ENCODE measurements at regions of chr11 and their contacts with region 1.

Region 1: DNA sequence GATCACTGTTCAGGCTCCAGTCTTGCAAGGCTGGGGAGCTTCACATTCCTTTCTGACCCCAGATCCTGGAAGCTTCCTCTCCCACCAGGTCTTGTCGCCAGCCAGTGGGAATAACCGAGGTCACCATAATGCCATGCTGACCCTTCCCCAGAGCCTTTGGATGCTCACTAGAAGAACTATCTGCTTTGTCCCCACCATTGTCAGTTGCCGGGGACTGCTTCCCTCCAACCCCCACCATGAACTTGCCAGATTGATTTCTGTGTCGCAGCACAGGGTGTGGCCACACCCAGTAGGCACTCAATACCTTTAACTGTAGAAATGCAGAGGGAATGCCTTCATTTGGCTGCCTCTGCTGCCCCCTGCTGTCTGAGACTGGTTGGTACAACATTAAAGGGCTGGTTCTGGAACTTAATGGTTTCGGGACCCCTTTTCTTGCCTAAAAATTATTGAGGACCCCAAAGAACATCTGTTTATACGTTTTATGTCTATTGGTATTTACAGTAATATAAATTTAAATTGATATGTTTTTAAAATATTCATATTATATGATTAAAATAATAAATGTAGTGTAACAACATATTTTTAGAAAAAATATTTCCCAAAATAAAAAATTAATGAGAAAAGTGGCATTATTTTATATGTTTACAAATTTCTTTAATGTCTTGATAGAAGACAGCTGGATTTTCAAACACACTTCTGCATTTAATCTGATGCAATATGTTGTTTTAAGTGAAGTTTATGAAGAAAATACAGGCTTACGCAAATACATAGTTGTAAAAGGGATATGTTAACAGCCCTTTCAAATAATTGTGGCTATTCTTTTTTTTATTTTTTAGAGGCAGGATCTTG is 6.7 kb upstream of the GDPD5 start:
- DNase-seq: peak; percentile 88
- ATAC-seq: peak; percentile 89
- H3K4me3 Mint-ChIP-seq: peak overlapping the region; percentile 44
- H3K27ac Mint-ChIP-seq: peak overlapping the region; percentile 39; the same call in 1 of the 2 replicates
- H3K4me1 Mint-ChIP-seq: peaks cover 18% of the 10 kb centered on the region
- H3K27me3 Mint-ChIP-seq: peaks cover 2% of the 10 kb centered on the region; the same call in 1 of the 2 replicates
- CTCF ChIP-seq: peak; percentile 72

Region 2: GRCh38 chr11:75425422-75425821 is 107.0 kb before region 1 on chr11:
- CTCF ChIA-PET with region 1: interaction called, 26 read pairs
- POLR2A ChIA-PET with region 1: no interaction called
- DNase-seq: peak; percentile 81
- ATAC-seq: peak; percentile 73
- H3K4me3 Mint-ChIP-seq: no peak overlapping the region
- H3K27ac Mint-ChIP-seq: no peak overlapping the region
- H3K4me1 Mint-ChIP-seq: peaks cover 21% of the 10 kb centered on the region
- H3K27me3 Mint-ChIP-seq: peaks cover 42% of the 10 kb centered on the region
- CTCF ChIP-seq: no peak; the same call in 1 of the 2 replicates

Region 3: DNA sequence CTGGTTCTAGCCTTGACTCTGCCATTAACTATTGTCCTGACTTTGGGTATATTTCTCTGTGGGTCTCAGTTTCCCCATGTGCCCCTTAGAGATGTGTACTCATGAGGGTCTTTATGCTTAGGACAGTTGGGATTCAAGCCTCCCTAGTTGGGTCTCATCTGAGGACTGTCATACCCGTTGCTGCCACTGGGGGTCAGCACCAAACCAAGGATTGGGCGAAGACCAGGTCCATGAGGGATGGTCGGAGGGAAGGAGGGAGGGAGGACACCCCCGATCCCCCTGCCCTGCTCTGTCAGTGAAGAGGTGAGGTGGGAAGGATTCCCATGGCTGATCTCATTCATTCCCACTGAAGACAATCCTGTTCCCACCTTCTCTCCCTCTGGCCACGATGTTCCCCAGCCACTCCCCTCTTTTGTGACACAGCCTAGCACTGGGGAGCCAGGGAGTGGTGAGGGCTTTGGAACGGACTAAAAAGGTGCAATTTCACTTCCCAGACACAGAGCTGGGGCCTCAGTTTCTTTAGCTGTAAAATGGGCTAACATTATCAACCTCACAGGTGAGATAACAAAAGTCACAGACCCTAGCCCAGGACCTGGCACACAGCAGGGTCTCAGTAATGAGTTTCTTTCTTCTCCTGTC is 87.0 kb before region 1 on chr11:
- CTCF ChIA-PET with region 1: interaction called, 69 read pairs
- POLR2A ChIA-PET with region 1: no interaction called
- DNase-seq: peak; percentile 88
- ATAC-seq: peak; percentile 91
- H3K4me3 Mint-ChIP-seq: no peak overlapping the region
- H3K27ac Mint-ChIP-seq: no peak overlapping the region
- H3K4me1 Mint-ChIP-seq: no peaks in the 10 kb centered on the region
- H3K27me3 Mint-ChIP-seq: no peaks in the 10 kb centered on the region; the same call in none of the 2 replicates
- CTCF ChIP-seq: peak; percentile 97

Region 4: DNA sequence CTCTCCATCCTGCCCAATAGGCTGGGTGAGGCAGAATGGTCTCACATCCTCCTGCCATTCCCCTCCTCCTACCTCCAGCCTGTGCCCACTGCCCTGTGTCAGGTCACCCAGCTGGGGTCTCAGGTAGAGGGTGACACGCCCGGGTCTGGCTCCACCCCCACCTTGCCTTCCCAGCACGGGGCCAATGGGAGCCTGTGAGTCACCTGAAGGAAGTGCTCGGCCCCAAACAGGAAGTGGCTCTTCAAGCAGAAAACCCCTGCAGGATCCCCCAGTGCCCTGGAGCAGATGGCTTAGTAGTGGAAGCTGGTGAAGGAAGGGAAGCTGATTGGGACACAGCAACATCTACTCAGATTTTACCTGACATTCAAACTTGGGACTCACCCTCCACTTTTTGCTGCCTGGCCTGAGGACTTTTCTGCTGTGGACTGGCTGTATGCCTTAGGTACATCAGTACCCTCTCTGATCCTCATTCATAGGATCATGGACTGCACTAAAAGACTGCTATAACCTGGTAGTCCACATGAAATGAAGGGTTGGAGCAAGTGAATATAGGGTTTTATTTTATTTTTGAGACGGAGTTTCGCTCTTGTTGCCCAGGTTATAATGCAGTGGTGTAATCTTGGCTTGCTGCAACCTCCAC is 40.1 kb before region 1 on chr11:
- CTCF ChIA-PET with region 1: interaction called, 21 read pairs
- POLR2A ChIA-PET with region 1: no interaction called
- DNase-seq: peak; percentile 32
- ATAC-seq: peak; percentile 64
- H3K4me3 Mint-ChIP-seq: no peak overlapping the region
- H3K27ac Mint-ChIP-seq: no peak overlapping the region
- H3K4me1 Mint-ChIP-seq: peaks cover 24% of the 10 kb centered on the region
- H3K27me3 Mint-ChIP-seq: no peaks in the 10 kb centered on the region
- CTCF ChIP-seq: no peak

Region 5: GRCh38 chr11:75554258-75555022 is 22.0 kb after region 1 on chr11:
- CTCF ChIA-PET with region 1: interaction called, 10 read pairs
- POLR2A ChIA-PET with region 1: no interaction called
- DNase-seq: peak; percentile 89
- ATAC-seq: peak; percentile 95
- H3K4me3 Mint-ChIP-seq: peak overlapping the region; percentile 32; the same call in 1 of the 2 replicates
- H3K27ac Mint-ChIP-seq: peak overlapping the region; percentile 96
- H3K4me1 Mint-ChIP-seq: peaks cover 48% of the 10 kb centered on the region
- H3K27me3 Mint-ChIP-seq: peaks cover 2% of the 10 kb centered on the region; the same call in 1 of the 2 replicates
- CTCF ChIP-seq: no peak

Region 6: DNA sequence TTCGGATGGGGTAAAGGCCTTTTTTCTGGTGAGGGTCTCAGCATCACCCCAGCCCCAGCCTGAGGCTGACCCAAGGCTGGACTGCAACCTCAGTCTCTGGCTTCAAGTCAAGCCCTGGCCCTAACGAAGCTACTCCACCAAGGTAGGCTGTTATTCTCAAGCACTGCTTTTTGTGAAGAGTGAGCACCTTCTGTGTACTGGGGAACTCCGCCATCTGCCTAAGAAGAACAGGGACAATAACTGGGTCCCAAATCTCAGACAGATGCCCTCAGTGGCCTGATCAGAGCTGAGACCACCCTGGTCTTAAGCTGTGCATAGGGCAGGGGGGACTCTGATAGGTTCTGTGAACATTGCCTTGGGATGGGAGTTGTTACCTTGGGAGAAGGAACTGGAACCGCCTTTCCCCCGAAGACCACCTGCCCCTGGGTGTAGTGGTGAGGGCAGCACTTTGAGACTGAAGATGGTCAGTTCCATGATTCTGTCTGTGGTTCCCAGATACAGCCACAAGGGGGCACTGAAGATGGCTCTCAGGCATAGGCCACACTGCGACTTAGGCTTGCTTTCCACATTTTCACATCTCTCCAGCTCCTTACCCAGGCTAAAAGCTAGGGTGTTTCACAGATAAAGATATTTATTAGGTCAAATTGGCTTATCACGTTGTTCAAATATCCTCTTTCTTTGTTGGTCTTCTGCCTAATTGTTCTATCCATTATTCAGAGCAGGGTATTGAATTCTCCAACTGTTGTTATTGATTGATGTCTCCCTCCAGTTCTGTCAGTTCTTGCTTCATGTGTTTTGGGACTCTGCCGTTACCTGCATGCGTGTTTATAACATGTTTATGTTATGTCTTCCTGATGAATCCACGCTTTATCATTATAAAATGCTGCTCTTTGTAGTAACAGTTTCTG is 270.7 kb after region 1 on chr11:
- CTCF ChIA-PET with region 1: no interaction called
- POLR2A ChIA-PET with region 1: no interaction called
- DNase-seq: peak; percentile 84
- ATAC-seq: peak; percentile 95
- H3K4me3 Mint-ChIP-seq: no peak overlapping the region
- H3K27ac Mint-ChIP-seq: no peak overlapping the region
- H3K4me1 Mint-ChIP-seq: peaks cover 4% of the 10 kb centered on the region; the same call in 1 of the 2 replicates
- H3K27me3 Mint-ChIP-seq: peaks cover 5% of the 10 kb centered on the region; the same call in 1 of the 2 replicates
- CTCF ChIP-seq: peak; percentile 82